MCF 10A (cell line): ENCODE measurements at regions of chr2 and their contacts with region 1.

Region 1: DNA sequence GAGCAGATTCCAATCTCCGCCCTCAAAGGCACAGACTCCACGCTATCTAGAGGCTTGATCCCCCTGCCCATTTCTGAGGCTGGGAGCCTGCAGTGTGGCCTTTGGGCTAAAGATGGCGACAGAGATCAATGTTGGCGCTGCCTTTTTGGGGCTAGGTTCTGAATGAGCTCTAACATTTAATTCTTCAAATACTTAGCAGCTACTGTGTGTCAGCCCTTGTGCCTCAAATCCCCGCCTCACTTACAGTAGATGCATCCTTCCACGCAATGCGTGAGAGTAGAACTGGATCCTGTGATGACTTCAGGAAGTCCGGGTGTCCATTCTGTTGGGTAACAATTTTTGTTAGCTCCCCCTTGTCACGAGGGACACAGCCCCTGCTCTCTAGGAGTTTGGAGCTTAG is 12.4 kb downstream of the IL1F10 start:
- DNase-seq: peak; percentile 62
- H3K4me3 Mint-ChIP-seq: no peak overlapping the region
- H3K27ac Mint-ChIP-seq: no peak overlapping the region
- H3K4me1 Mint-ChIP-seq: peaks cover 36% of the 10 kb centered on the region
- H3K27me3 Mint-ChIP-seq: no peaks in the 10 kb centered on the region
- CTCF ChIP-seq: peak; percentile 86

Region 2: DNA sequence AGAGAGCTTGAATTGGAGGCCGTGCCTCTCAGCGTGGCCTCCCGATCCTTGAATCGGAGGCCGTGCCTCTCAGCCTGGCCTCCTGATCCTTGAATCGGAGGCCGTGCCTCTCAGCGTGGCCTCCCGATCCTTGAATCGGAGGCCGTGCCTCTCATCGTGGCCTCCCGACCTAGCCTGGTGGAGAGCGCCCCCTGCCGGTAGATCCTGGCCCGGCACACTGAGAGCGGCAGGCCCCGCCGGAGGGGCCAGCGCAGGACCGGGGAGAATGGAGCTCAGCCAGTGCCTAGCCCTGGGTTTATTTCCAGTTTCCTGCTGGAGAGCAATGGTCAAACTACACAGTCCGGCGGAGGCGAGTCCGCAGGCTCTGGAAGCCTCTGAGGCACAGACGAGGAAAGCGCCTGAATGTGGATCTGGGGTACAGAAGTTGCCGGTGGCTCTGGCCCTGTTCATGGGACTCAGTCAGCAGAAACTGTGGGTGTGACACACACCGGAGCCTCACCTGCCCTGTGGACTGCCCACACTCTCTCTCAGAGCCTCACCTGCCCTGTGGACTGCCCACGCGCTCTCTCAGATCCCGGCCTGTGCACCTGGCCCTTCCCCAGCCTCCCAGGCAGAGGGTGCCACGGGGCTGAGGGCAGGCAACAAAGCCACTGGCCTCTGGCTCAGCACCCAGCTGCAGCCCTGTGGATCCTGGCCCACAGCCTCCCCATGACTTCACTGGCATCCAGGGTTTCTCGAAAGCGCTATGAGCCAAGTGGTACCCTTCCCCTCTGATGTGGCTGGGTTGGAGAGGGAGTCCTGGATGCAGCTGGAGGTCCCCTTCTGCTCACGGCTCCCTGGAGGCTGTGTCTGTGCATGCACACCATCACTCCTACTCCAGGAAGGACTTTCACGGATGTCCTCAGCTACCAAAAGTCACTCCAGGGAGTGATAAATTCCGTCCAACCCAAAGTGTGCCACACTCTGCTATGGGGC is 28.9 kb before region 1 on chr2:
- CTCF ChIA-PET with region 1: no interaction called
- POLR2A ChIA-PET with region 1: no interaction called
- intact Hi-C with region 1: no loop called
- DNase-seq: no peak
- H3K4me3 Mint-ChIP-seq: no peak overlapping the region
- H3K27ac Mint-ChIP-seq: no peak overlapping the region
- H3K4me1 Mint-ChIP-seq: no peaks in the 10 kb centered on the region
- H3K27me3 Mint-ChIP-seq: peaks cover 11% of the 10 kb centered on the region
- CTCF ChIP-seq: peak; percentile 15

Region 3: DNA sequence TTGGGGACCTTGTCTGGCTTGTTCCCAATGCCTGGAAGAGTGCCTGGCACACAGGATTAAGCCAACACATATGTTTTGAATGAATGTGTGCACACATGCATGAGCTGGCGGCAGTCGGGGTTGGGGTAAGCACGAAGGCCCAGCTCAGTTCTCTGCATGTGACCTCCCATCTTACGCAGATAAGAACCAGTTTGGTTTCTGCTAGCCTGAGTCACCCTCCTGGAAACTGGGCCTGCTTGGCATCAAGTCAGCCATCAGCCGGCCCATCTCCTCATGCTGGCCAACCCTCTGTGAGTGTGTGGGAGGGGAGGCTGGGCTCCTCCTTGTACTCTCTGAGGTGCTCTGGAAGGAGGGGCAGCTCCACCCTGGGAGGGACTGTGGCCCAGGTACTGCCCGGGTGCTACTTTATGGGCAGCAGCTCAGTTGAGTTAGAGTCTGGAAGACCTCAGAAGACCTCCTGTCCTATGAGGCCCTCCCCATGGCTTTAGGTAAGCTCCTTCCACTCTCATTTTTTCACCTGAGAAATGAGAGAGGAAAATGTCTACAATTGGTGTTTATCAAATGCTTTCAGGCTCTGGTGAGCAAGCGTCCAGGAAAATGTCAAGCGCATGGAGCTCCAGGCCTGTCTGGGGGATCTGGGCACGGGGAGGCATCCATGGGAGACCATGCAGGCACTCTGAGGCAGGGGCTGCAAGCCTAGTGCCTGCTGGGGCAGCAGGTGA is 37.6 kb after region 1 on chr2:
- CTCF ChIA-PET with region 1: interaction called, 32 read pairs
- POLR2A ChIA-PET with region 1: interaction called, 9 read pairs
- intact Hi-C with region 1: no loop called
- DNase-seq: peak; percentile 94
- H3K4me3 Mint-ChIP-seq: no peak overlapping the region
- H3K27ac Mint-ChIP-seq: peak overlapping the region; percentile 81
- H3K4me1 Mint-ChIP-seq: peaks cover 13% of the 10 kb centered on the region
- H3K27me3 Mint-ChIP-seq: no peaks in the 10 kb centered on the region
- CTCF ChIP-seq: no peak